ENCODE measurements at regions of chr11 and their contacts with region 1.

Region 1: DNA sequence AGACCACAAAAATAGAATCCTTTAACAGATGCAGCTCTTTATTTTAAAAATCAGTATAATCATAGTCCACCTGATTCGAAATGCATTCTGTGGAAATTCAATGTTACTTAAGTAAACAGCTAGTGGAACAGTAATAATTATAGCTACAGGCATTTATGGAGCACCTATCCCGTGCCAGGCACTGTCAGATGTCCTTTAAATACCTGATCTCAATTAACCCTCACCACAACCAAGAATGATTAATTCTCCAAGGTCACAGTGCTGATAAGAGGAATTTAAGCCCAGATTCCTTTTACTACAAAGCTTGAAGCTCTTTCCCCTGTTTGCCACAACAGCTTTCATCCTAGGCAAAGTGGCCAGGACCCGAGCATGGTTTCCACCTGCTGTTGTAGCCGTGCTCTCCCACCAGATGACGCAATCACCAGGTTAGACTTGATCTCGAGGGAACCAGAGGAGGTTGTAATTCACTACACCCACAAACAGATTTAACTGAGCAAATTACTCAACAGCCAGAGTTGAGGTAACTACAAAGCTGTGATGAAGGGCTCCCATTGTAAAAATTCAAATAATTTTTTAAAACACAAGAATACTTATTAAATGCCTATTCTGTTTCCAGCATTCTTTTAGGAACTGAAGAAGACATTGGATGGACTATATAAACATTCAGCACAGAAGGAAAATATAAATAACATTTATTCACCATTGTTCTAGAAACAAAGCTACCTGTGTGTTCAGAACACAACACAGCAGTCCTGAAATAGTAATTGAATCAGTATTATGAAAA is 10.3 kb downstream of the PRDM10 start:
- DNase-seq: peak; percentile 81
- H3K4me3 Mint-ChIP-seq: no peak overlapping the region
- H3K27ac Mint-ChIP-seq: no peak overlapping the region
- H3K4me1 Mint-ChIP-seq: peaks cover 24% of the 10 kb centered on the region
- H3K27me3 Mint-ChIP-seq: no peaks in the 10 kb centered on the region
- CTCF ChIP-seq: peak; percentile 32

Region 2: GRCh38 chr11:129652828-129653227 is 339.5 kb before region 1 on chr11:
- CTCF ChIA-PET with region 1: no interaction called
- POLR2A ChIA-PET with region 1: no interaction called
- intact Hi-C with region 1: no loop called
- DNase-seq: peak; percentile 95
- H3K4me3 Mint-ChIP-seq: no peak overlapping the region
- H3K27ac Mint-ChIP-seq: no peak overlapping the region
- H3K4me1 Mint-ChIP-seq: peaks cover 13% of the 10 kb centered on the region
- H3K27me3 Mint-ChIP-seq: peaks cover 45% of the 10 kb centered on the region
- CTCF ChIP-seq: no peak

Region 3: DNA sequence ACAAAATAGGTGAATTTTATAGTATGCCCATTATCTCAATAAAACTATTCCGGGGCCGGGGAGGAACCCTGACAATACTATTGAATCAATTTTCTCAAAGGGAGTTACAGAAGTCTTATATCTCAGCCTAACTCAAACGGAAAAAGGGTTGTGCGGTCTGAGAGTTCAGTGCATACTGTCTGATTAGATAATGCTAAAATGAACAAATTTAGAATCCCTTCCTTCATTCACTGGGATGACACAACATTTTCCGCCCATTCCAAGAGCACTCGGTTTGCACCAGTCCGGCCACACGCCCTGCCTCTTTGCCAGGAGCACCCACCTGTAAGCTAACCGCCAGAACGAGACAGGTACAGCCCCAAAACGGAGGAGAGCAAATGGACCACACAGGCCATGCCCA is 47.0 kb before region 1 on chr11:
- CTCF ChIA-PET with region 1: interaction called, 4 read pairs
- POLR2A ChIA-PET with region 1: no interaction called
- intact Hi-C with region 1: loop called (anchors 1 kb)
- DNase-seq: no peak
- H3K4me3 Mint-ChIP-seq: no peak overlapping the region
- H3K27ac Mint-ChIP-seq: no peak overlapping the region
- H3K4me1 Mint-ChIP-seq: no peaks in the 10 kb centered on the region
- H3K27me3 Mint-ChIP-seq: no peaks in the 10 kb centered on the region
- CTCF ChIP-seq: no peak

Region 4: DNA sequence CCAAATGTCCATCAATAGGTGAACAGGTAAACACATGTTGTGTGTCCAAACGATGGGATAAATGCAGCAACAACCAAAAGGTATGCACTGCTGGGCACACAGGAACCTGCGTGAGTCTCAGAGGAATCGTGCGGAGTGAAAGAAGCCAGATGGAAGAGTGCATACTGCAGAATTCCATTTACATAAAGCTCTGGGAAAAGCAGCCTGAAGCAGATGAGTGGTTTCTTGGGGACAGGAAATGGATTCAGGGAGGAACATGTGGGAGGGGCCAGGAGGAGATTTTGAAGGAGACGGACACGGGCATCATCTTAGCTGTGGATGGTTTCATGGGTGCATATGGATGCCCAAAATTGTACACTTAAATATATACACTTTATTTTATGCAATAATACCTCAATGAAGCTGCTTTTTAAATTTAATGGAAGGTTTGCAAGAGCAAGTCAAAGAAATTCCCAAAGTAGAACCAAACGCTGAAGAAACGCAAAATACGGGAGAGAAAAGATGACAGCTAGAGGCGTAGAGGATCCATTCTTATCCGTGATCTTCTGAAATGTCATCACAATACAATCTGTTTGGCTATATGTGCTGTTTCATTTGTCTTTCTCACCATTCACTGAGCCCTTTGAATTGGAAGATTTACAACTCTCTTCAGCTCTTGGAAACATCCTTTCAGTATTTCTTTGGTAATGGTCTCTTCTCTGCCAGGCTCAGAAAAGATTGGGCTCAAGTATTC is 191.7 kb after region 1 on chr11:
- CTCF ChIA-PET with region 1: no interaction called
- POLR2A ChIA-PET with region 1: no interaction called
- intact Hi-C with region 1: no loop called
- DNase-seq: no peak
- H3K4me3 Mint-ChIP-seq: no peak overlapping the region
- H3K27ac Mint-ChIP-seq: no peak overlapping the region
- H3K4me1 Mint-ChIP-seq: peaks cover 13% of the 10 kb centered on the region
- H3K27me3 Mint-ChIP-seq: no peaks in the 10 kb centered on the region
- CTCF ChIP-seq: no peak